ENCODE measurements at regions of chr17 and their contacts with region 1.

Region 1: DNA sequence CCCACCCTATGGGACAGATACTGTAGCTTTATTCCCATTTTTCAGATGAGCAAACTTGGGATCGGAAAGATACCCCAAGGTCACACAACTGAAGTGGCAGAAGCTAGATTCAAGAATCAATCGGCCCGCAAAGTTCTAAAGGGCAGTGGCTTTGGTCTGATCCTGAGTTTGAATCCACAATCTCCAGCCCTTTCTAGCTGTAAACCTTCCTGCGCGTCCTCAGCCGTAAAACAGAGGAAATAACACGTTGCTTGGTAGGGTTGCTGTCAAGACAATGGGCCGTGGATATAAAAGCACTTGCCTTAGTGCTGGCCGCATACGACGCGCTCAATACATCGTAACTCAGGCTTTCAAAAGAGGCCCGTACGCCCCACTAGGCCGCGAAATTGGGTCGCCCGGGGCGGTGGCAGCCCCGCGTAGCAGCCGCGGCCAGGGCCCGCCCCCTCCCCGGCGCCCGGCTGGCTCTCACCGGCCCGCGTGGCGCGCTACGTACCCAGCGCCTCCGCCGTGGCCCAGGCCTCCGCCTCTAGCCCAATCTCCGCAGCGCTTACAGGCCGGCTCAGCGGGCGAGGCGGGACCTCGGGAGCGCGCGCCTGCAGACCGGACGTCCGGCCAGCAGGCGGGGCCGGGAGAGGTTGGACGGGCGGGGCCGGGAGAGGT is at the start of gene DCAKD:
- DNase-seq: peak; percentile 97
- H3K4me3 ChIP-seq: peak within 1 kb of the TSS; percentile 51 to 58 (median 55)
- H3K27ac ChIP-seq: peak within 1 kb of the TSS; percentile 94
- H3K4me1 ChIP-seq: peaks cover 23% of the 10 kb centered on the region
- H3K27me3 ChIP-seq: no peaks in the 10 kb centered on the region
- CTCF ChIP-seq: no peak
- total RNA-seq, gene DCAKD: 35.4 to 68.0 TPM

Region 2: GRCh38 chr17:44899069-44899782 is 152.0 kb before region 1 on chr17 and contains the start of gene EFTUD2:
- CTCF ChIA-PET with region 1: no interaction called
- dilution Hi-C with region 1: no loop called
- in situ Hi-C with region 1: no loop called
- intact Hi-C with region 1: loop called (anchors 1 kb)
- DNase-seq: peak; percentile 86
- H3K4me3 ChIP-seq: peak within 1 kb of the TSS; percentile 69 to 89 (median 88)
- H3K27ac ChIP-seq: peak within 1 kb of the TSS; percentile 97
- H3K4me1 ChIP-seq: peaks cover 29% of the 10 kb centered on the region
- H3K27me3 ChIP-seq: no peaks in the 10 kb centered on the region
- CTCF ChIP-seq: no peak
- total RNA-seq, gene EFTUD2: 85.4 to 106 TPM

Region 3: GRCh38 chr17:44968226-44969143 is 82.7 kb before region 1 on chr17 and contains the start of gene C1QL1:
- CTCF ChIA-PET with region 1: interaction called, 4 read pairs
- dilution Hi-C with region 1: no loop called
- in situ Hi-C with region 1: no loop called
- intact Hi-C with region 1: loop called (anchors 5 kb)
- DNase-seq: peak; percentile 87
- H3K4me3 ChIP-seq: peak within 1 kb of the TSS; percentile 45 to 61 (median 49)
- H3K27ac ChIP-seq: no peak within 1 kb of the TSS
- H3K4me1 ChIP-seq: peaks cover 44% of the 10 kb centered on the region
- H3K27me3 ChIP-seq: peaks cover 14% of the 10 kb centered on the region
- CTCF ChIP-seq: peak in 1 of 2 donors; percentile 18
- total RNA-seq, gene C1QL1: 0.54 TPM in 1 of 2 donors, not detected in the other